ENCODE measurements at regions of chr10 and their contacts with region 1.

Region 1: DNA sequence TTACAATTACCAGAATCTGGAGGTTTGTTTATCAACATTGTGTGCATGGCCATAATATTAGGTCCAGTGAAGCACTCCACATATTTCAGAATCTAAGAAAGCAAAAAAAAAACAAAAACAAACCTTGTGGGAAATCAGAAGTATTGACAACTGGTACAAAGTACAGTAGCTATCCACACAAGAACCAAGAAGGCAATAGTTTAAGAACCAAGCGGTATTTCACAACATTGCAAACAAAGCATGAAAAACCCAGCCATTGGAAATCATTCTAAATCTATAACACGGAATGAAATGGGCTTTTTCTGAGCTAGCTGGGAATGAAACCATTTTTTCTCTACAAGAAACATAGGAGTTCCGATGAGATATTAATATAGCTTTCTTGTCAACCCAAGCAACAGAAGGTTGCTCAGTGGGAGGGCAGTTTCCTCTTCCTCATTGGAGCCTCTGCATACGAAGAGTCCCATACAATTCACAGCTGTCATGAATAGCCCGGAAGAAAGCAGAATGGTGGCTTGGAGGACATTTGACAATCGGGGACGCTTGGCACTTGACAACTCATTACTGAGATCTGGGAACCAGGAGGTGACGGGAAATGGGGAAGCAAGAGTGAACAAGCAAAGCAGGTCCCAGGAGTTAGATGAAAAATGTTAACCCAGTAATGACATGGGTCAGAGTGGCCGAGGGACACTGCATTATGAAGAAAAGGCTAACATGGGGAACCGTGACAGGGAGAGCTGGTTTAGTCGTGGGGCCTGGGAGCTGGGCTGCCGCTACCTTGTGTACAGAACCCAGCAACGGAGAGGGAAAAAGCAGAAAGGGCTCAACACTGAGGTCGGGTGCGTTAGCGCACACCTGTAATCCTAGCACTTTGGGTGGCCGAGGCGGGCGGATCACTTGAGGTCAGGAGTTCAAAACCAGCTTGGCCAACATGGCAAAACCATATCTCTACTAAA is 7.8 kb downstream of the PHYH start:
- DNase-seq: no peak
- ATAC-seq: no peak
- H3K4me3 ChIP-seq: no peak overlapping the region
- H3K4me1 ChIP-seq: no peaks in the 10 kb centered on the region
- CTCF ChIP-seq: no peak

Region 2: GRCh38 chr10:13219685-13220670 is 72.1 kb before region 1 on chr10:
- intact Hi-C with region 1: loop called in 1 of 2 experiments (anchors 5 kb)
- DNase-seq: peak in 2 of 3 donors; percentile 54 to 56
- ATAC-seq: peak; percentile 44
- H3K4me3 ChIP-seq: no peak overlapping the region
- H3K4me1 ChIP-seq: no peaks in the 10 kb centered on the region
- CTCF ChIP-seq: no peak

Region 3: DNA sequence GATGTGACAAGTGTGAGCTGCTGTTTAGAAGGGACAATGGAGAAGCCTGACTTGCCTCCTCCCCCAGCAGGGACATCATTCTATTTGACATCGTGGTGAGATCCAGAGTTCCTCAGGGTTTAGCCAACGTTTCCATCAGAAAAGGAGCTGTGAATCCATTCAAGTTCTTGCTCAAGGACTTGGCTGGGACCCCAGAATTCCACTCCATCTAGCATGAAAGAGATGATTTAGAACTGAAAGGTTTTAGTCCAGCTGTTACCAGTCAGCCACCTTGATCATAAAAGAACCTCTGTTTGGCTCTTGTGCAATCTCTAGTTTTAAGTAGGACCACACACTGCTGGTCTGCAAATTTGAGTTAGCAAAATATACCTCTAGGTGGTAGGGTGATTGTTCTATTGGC is 701.1 kb after region 1 on chr10:
- intact Hi-C with region 1: no loop called
- DNase-seq: peak in 1 of 3 donors; percentile 7
- ATAC-seq: no peak
- H3K4me3 ChIP-seq: no peak overlapping the region
- H3K4me1 ChIP-seq: no peaks in the 10 kb centered on the region
- CTCF ChIP-seq: no peak